ENCODE measurements at regions of chr18 and their contacts with region 1.

Region 1: GRCh38 chr18:5768454-5768853 is 126.9 kb downstream of the TMEM200C start:
- DNase-seq: no peak
- H3K4me3 Mint-ChIP-seq: no peak overlapping the region
- H3K27ac Mint-ChIP-seq: no peak overlapping the region
- H3K4me1 Mint-ChIP-seq: no peaks in the 10 kb centered on the region
- H3K27me3 Mint-ChIP-seq: no peaks in the 10 kb centered on the region

Region 2: GRCh38 chr18:6170604-6171003 is 402.1 kb after region 1 on chr18:
- intact Hi-C with region 1: loop called (anchors 10 kb)
- DNase-seq: no peak
- H3K4me3 Mint-ChIP-seq: no peak overlapping the region
- H3K27ac Mint-ChIP-seq: no peak overlapping the region
- H3K4me1 Mint-ChIP-seq: no peaks in the 10 kb centered on the region
- H3K27me3 Mint-ChIP-seq: no peaks in the 10 kb centered on the region